OCI-LY7 (cell line): ENCODE measurements at regions of chr9 and their contacts with region 1.

Region 1: DNA sequence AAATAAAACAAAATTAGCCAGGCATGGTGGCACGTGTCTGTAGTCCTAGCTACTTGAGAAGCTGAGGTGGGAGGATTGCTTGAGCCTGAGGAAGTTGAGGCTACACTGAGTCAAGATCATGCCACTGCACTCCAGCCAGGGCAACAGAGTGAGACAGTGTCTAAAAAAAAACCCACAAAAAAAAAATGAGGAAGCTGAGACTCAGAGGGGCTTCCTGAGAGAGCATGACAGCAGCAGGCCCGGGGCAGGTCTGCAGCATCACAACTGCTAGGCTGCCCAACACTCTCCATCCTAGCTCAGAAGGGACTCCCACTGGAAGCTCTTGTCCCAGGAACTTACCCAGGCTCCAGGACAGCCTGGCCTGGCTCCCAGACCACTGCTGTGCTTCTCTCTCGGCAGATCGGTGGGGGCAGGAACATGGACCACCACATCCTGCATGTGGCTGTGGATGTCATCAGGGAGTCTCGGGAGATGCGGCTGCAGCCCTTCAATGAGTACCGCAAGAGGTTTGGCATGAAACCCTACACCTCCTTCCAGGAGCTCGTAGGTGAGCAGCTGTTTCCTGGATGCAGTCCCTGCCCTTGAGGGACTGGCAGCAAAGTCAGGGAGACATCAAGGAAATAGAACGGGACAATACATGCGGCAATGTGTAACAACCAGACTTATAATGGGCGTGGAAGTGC is 19.1 kb downstream of the PTGS1 start:
- DNase-seq: peak; percentile 82
- H3K4me3 ChIP-seq: peak overlapping the region; percentile 36
- H3K27ac ChIP-seq: peak overlapping the region; percentile 62
- H3K4me1 ChIP-seq: peaks cover 23% of the 10 kb centered on the region
- CTCF ChIP-seq: no peak

Region 2: GRCh38 chr9:122810306-122810946 is 420.5 kb after region 1 on chr9:
- CTCF ChIA-PET with region 1: no interaction called
- POLR2A ChIA-PET with region 1: no interaction called
- intact Hi-C with region 1: loop called (anchors 10 kb)
- DNase-seq: peak; percentile 79
- H3K4me3 ChIP-seq: no peak overlapping the region
- H3K27ac ChIP-seq: no peak overlapping the region
- H3K4me1 ChIP-seq: no peaks in the 10 kb centered on the region
- CTCF ChIP-seq: peak; percentile 92